ENCODE measurements at regions of chr10 and their contacts with region 1.

Region 1: DNA sequence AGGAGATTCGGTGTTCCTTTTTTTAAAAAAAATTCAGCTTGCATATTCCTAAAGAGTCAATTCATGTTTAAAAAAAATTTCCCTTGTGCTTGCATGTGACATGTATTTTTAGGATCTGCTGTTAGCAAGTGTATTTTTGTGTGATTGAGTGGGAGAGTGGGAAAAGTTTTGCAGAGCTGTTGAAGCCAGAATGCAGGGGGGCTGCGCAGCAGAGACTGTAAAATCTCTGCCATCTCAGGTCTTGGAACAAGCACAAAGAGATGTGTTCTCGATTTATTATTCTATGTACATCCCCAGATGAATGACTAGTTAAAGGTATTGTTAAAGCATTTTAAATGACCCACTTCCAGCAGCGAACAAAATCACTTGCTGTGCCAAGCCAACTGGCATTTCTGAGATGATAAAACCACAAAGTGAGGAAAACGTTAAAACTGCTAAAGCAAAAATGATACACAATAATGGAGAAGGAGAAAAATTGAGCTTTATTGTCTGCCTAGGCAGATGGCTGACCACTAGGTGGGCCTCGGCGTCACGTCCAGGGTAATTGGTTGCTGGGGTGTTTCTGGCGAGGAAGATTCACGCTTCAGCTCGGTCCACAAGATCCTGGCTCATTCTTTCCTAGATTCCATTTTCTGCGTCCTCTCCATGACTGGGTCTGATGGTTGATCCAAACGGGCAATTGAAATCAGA is 67.0 kb upstream of the ATRNL1 start:
- DNase-seq: no peak
- ATAC-seq: peak; percentile 53
- H3K4me3 ChIP-seq: no peak overlapping the region
- H3K27ac ChIP-seq: no peak overlapping the region
- H3K4me1 ChIP-seq: peaks cover 20% of the 10 kb centered on the region
- H3K27me3 ChIP-seq: no peaks in the 10 kb centered on the region; a peak in 1 of 5 replicates
- CTCF ChIP-seq: 0 out of 2 replicates have a peak, but pooled peaks have one; percentile 16
- EP300 ChIP-seq: no peak
- POLR2A ChIP-seq: no peak
- RAD21 ChIP-seq: no peak

Region 2: GRCh38 chr10:115092555-115093285 is 66.5 kb after region 1 on chr10:
- CTCF ChIA-PET with region 1: no interaction called
- POLR2A ChIA-PET with region 1: no interaction called
- in situ Hi-C with region 1: no loop called
- intact Hi-C with region 1: loop called (anchors 5 kb)
- DNase-seq: no peak
- ATAC-seq: peak; percentile 34
- H3K4me3 ChIP-seq: peak overlapping the region; percentile 47 to 73 (median 62); a peak in 4 of 6 replicates
- H3K27ac ChIP-seq: no peak overlapping the region
- H3K4me1 ChIP-seq: no peaks in the 10 kb centered on the region
- H3K27me3 ChIP-seq: peaks cover 3 to 26% of the 10 kb centered on the region in 2 experiments; a peak in 3 of 5 replicates
- CTCF ChIP-seq: no peak
- EP300 ChIP-seq: no peak
- POLR2A ChIP-seq: no peak
- RAD21 ChIP-seq: no peak

Measured in HepG2 (cell line).